H1 (cell line): ENCODE measurements at regions of chr7 and their contacts with region 1.

Region 1: GRCh38 chr7:114081606-114082425 is 163.0 kb upstream of the PPP1R3A start:
- DNase-seq: no peak
- H3K4me3 ChIP-seq: peak overlapping the region in 1 of 4 experiments; percentile 71; a peak in 1 of 8 replicates
- H3K27ac ChIP-seq: no peak overlapping the region
- H3K4me1 ChIP-seq: peaks cover 0 to 12% (median 2%) of the 10 kb centered on the region in 4 experiments; a peak in 5 of 7 replicates
- H3K27me3 ChIP-seq: peaks cover 21 to 49% (median 38%) of the 10 kb centered on the region in 4 experiments; a peak in 6 of 7 replicates
- CTCF ChIP-seq: peak in 2 of 3 experiments; percentile 34 to 51; a peak in 2 of 4 replicates
- EP300 ChIP-seq: no peak
- POLR2A ChIP-seq: no peak
- RAD21 ChIP-seq: peak; percentile 81 to 86

Region 2: DNA sequence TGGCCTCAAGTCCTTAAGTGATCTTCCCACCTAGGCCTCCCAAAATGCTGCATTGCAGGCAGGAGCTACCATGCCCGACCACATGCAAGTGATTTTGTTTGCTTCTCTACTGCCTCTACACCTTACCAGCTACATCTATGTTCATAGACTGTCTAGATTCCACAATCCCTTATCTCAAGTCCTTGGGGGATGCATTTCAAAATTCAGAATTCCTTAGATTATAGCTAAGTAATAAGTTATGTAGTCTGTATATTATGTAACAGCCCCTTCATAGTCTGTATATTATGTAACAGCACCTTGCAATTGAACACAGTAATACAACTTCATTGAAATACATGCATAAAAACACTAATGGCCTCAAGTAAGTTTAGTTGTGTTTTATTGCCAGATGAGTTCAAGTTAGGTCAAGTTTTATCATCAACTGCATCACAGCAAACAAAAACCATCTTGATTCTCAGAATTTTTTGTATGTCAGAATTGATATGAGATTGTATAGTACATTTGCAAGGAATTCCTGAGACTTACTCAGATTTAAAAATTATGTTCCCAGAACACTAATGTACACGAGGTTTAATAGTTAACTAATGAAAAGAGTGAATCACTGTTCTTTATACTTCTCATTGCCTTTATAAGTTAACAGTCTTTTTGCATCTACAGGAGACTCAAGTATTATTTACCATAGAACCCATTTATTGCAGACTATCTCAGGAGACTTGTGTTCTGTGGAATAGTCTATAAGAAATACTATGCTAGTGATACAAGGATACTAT is 321.2 kb after region 1 on chr7:
- CTCF ChIA-PET with region 1: interaction called, 26 read pairs
- POLR2A ChIA-PET with region 1: no interaction called
- DNase-seq: no peak
- H3K4me3 ChIP-seq: no peak overlapping the region
- H3K27ac ChIP-seq: no peak overlapping the region
- H3K4me1 ChIP-seq: no peaks in the 10 kb centered on the region
- H3K27me3 ChIP-seq: no peaks in the 10 kb centered on the region
- CTCF ChIP-seq: no peak
- EP300 ChIP-seq: no peak
- POLR2A ChIP-seq: no peak
- RAD21 ChIP-seq: no peak

Region 3: GRCh38 chr7:114414156-114415063 is 332.6 kb after region 1 on chr7 and contains the start of gene FOXP2:
- CTCF ChIA-PET with region 1: interaction called, 27 read pairs
- POLR2A ChIA-PET with region 1: no interaction called
- DNase-seq: no peak
- H3K4me3 ChIP-seq: peak within 1 kb of the TSS in 1 of 4 experiments; percentile 7; a peak in 2 of 8 replicates
- H3K27ac ChIP-seq: no peak within 1 kb of the TSS
- H3K4me1 ChIP-seq: peaks cover 0 to 10% (median 6%) of the 10 kb centered on the region in 4 experiments; a peak in 4 of 7 replicates
- H3K27me3 ChIP-seq: no peaks in the 10 kb centered on the region
- CTCF ChIP-seq: no peak
- EP300 ChIP-seq: no peak
- POLR2A ChIP-seq: no peak
- RAD21 ChIP-seq: no peak
- total RNA-seq, gene FOXP2: 0.10 and 0.43 TPM in 2 replicates

Region 4: DNA sequence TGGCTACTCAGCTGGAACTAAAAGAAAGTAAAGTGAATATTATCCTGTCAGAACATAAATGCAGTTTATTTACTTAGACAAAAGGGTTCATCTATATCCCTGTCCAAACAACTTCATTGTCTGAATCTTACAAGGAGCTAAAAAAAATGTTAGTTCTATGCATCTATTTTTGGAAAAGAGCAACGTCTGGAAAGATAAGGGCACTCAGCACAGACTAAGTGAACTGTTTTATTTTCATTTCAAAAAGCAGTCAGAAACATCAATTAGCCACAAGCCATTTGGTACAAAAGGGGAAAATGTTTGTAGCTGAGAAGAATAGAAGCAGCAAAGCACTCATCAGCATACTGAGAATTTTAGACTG is 578.3 kb after region 1 on chr7:
- CTCF ChIA-PET with region 1: interaction called, 10 read pairs
- POLR2A ChIA-PET with region 1: no interaction called
- DNase-seq: no peak
- H3K4me3 ChIP-seq: no peak overlapping the region
- H3K27ac ChIP-seq: no peak overlapping the region
- H3K4me1 ChIP-seq: peaks cover 0 to 15% (median 5%) of the 10 kb centered on the region in 4 experiments; a peak in 3 of 7 replicates
- H3K27me3 ChIP-seq: no peaks in the 10 kb centered on the region
- CTCF ChIP-seq: no peak
- EP300 ChIP-seq: no peak
- POLR2A ChIP-seq: no peak
- RAD21 ChIP-seq: no peak